T-cell (primary cell): ENCODE measurements at regions of chr11 and their contacts with region 1.

Region 1: DNA sequence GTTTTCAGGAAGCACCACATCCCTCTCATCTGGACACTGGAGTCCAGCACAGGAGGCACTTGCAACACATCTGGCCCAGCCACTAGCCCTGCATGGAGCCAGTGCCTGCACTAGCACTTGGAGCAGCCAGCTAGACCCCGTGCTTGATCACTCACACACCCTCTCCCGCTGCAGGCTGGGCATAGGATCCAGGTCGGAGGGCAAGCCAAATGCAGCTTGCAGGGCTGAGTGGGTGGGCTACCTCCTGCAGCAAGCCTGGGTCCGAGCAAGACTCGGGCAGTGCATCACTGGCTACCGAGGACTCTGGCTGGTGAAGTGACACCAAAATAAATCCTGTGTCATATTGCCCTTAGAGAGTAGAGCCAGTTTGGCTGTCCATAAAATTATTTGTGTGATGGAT is 1795.4 kb downstream of the LRRC4C start:
- DNase-seq: no peak
- ATAC-seq: no peak
- H3K4me3 ChIP-seq: peak overlapping the region in 1 of 2 donors; percentile 8
- H3K4me3 Mint-ChIP-seq: no peak overlapping the region
- H3K27ac ChIP-seq: no peak overlapping the region
- H3K27ac Mint-ChIP-seq: no peak overlapping the region
- H3K4me1 ChIP-seq: no peaks in the 10 kb centered on the region
- H3K4me1 Mint-ChIP-seq: no peaks in the 10 kb centered on the region
- H3K27me3 ChIP-seq: no peaks in the 10 kb centered on the region
- H3K27me3 Mint-ChIP-seq: no peaks in the 10 kb centered on the region

Region 2: DNA sequence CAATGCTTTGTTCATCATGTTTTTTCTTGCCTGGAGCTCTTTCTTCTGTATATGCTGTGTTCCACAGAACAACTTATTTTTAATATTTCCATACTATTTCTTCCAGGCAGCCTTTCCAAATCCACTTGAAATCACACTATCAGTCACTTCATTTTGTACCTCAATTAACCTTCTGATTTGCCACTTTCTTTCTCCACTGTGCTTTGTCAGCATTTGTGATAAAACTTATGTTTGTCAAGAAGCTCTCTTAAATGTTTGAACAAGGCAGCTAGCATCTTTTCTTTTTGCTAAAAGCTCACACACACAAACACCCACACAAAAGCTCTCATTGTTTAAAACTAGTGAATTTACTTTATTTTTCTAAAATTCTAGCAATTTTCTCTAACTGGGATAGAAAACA is 1051.3 kb before region 1 on chr11:
- CTCF ChIA-PET with region 1: no interaction called
- POLR2A ChIA-PET with region 1: interaction called in 1 of 2 experiments, 10 read pairs
- DNase-seq: no peak
- ATAC-seq: no peak
- H3K4me3 ChIP-seq: no peak overlapping the region
- H3K4me3 Mint-ChIP-seq: no peak overlapping the region
- H3K27ac ChIP-seq: no peak overlapping the region
- H3K27ac Mint-ChIP-seq: no peak overlapping the region
- H3K4me1 ChIP-seq: no peaks in the 10 kb centered on the region
- H3K4me1 Mint-ChIP-seq: no peaks in the 10 kb centered on the region
- H3K27me3 ChIP-seq: no peaks in the 10 kb centered on the region
- H3K27me3 Mint-ChIP-seq: no peaks in the 10 kb centered on the region